MCF 10A (cell line): ENCODE measurements at regions of chr1 and their contacts with region 1.

Region 1: DNA sequence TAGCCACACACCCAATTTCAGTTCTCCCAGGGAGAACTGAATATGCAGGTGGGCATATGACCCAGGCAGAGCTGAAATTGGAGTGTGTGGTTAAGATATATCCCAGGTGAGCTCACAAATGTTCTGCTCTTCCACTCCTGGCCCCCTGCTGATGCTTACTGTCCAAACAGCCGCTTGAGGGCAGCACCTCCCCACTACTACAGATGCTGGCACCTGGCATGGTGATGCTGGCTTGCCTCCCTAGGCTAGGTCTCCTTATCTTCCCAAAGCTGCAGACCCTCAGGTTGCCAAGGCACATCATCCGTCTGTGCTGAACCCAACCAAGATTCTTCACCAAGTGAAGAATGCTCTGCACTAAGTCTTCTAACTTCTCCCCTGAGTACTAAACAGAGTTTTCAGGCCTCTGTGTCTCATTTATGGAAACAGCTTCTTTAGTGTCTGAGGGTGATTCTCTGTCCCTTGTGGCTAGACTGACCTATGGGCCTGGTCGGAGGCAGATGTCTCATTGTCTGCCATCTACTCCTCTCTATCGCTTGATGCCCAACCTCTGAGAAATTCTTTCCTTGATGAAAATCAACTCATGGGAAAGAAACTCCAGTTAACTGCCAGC is 27.2 kb downstream of the XCL1 start:
- DNase-seq: peak; percentile 88
- H3K4me3 Mint-ChIP-seq: no peak overlapping the region
- H3K27ac Mint-ChIP-seq: no peak overlapping the region
- H3K4me1 Mint-ChIP-seq: peaks cover 7% of the 10 kb centered on the region
- H3K27me3 Mint-ChIP-seq: no peaks in the 10 kb centered on the region
- CTCF ChIP-seq: peak; percentile 99

Region 2: GRCh38 chr1:168591066-168591465 is 12.5 kb before region 1 on chr1:
- CTCF ChIA-PET with region 1: interaction called, 21 read pairs
- POLR2A ChIA-PET with region 1: no interaction called
- intact Hi-C with region 1: no loop called
- DNase-seq: no peak
- H3K4me3 Mint-ChIP-seq: no peak overlapping the region
- H3K27ac Mint-ChIP-seq: no peak overlapping the region
- H3K4me1 Mint-ChIP-seq: no peaks in the 10 kb centered on the region
- H3K27me3 Mint-ChIP-seq: no peaks in the 10 kb centered on the region
- CTCF ChIP-seq: no peak

Region 3: GRCh38 chr1:168628807-168629206 is 25.2 kb after region 1 on chr1:
- CTCF ChIA-PET with region 1: interaction called, 61 read pairs
- POLR2A ChIA-PET with region 1: interaction called, 3 read pairs
- intact Hi-C with region 1: no loop called
- DNase-seq: peak; percentile 89
- H3K4me3 Mint-ChIP-seq: no peak overlapping the region
- H3K27ac Mint-ChIP-seq: peak overlapping the region; percentile 39
- H3K4me1 Mint-ChIP-seq: peaks cover 11% of the 10 kb centered on the region
- H3K27me3 Mint-ChIP-seq: no peaks in the 10 kb centered on the region
- CTCF ChIP-seq: no peak

Region 4: GRCh38 chr1:169106095-169106920 is 502.7 kb after region 1 on chr1 and contains the start of gene ATP1B1:
- CTCF ChIA-PET with region 1: interaction called, 107 read pairs
- POLR2A ChIA-PET with region 1: interaction called, 8 read pairs
- intact Hi-C with region 1: loop called (anchors 1 kb)
- DNase-seq: peak; percentile 92
- H3K4me3 Mint-ChIP-seq: peak within 1 kb of the TSS; percentile 80
- H3K27ac Mint-ChIP-seq: peak within 1 kb of the TSS; percentile 96
- H3K4me1 Mint-ChIP-seq: peaks cover 49% of the 10 kb centered on the region
- H3K27me3 Mint-ChIP-seq: no peaks in the 10 kb centered on the region
- CTCF ChIP-seq: peak; percentile 60
- total RNA-seq, gene ATP1B1: 20.0 and 24.4 TPM in 2 replicates

Region 5: DNA sequence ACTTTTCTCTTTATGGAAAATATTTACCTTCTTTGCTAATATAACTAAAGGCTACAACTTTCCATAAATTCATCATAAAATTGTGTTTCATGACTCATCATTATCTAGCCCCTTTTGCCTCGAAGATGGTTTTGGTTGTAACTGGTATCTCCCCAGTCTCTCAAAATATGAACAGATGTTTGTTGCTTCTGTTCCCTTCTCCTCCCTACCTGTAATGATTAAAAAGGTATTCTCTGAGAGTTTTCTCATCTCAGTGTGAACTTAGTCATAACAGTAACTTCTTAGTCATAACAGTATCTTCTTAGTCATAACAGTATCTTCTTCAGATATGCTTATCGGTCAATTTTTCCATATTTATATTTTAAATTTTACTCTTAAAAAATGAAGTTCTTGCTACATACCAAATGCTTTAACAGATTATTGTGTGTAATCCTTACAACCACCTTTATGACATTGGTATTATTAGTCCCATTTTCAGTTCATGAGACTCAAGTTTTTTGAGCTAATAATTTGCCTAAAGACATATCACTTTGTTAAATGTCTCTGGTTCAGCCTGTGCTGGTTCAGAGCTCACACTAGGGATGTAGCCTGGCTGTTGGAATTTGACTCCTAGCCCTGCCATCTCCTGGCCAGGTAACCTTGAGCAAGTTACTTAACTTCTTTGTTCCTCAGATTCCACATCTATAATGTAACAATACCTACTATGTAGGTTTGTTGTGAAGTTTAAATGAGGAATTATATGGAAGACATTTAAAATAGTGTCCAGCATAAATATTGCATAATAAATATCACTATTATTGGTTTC is 535.5 kb after region 1 on chr1:
- CTCF ChIA-PET with region 1: interaction called, 33 read pairs
- POLR2A ChIA-PET with region 1: no interaction called
- intact Hi-C with region 1: loop called (anchors 1 kb)
- DNase-seq: no peak
- H3K4me3 Mint-ChIP-seq: no peak overlapping the region
- H3K27ac Mint-ChIP-seq: no peak overlapping the region
- H3K4me1 Mint-ChIP-seq: peaks cover 5% of the 10 kb centered on the region
- H3K27me3 Mint-ChIP-seq: no peaks in the 10 kb centered on the region
- CTCF ChIP-seq: no peak

Region 6: GRCh38 chr1:169348383-169349036 is 744.9 kb after region 1 on chr1:
- CTCF ChIA-PET with region 1: interaction called, 341 read pairs
- POLR2A ChIA-PET with region 1: interaction called, 8 read pairs
- intact Hi-C with region 1: loop called (anchors 1 kb)
- DNase-seq: peak; percentile 77
- H3K4me3 Mint-ChIP-seq: no peak overlapping the region
- H3K27ac Mint-ChIP-seq: no peak overlapping the region
- H3K4me1 Mint-ChIP-seq: no peaks in the 10 kb centered on the region
- H3K27me3 Mint-ChIP-seq: no peaks in the 10 kb centered on the region
- CTCF ChIP-seq: peak; percentile 84

Region 7: DNA sequence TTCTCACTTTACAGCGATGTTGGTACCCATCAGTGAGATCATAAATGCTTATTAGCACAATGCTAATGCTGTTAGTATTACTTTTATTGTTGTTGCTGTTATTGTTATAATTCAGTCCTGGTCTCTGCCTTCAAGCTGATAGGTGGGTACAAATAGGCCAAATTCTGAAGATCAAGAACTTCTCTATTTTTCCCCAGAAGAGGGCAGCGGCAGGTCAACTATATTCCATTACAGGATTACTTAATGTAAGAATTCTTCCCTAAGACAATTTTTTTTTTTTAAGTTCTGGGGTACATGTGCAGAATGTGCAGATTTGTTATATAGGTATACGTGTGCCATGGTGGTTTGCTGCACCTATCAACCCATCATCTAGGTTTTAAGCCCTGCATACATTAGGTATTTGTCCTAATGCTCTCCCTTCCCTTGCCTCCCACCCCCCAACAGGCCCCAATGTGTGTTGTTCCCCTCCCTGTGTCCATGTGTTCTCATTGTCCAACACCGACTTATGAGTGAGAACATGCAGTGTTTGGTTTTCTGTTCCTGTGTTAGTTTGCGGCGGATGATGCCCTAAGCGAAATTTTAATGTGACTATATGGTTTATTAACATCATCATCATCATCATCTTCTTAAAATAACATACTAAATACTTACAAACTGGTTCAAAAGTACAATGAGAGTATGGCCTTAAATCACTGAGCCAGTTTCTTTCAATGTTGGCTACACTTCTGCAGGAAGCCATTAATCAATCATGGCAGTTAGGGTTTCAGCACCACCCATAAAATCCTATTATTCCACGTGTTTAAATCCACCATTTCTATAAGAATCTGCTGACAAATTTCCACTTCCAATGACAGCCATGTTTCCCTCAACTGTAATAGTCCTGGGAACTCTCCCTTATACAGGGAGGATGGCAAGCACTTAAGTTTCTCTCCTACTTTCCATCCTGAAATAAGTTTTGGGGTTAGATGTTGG is 862.9 kb after region 1 on chr1:
- CTCF ChIA-PET with region 1: interaction called, 12 read pairs
- POLR2A ChIA-PET with region 1: no interaction called
- intact Hi-C with region 1: loop called (anchors 5 kb)
- DNase-seq: peak; percentile 72
- H3K4me3 Mint-ChIP-seq: no peak overlapping the region
- H3K27ac Mint-ChIP-seq: no peak overlapping the region
- H3K4me1 Mint-ChIP-seq: peaks cover 8% of the 10 kb centered on the region
- H3K27me3 Mint-ChIP-seq: no peaks in the 10 kb centered on the region
- CTCF ChIP-seq: peak; percentile 65